Activated CD8-positive, alpha-beta T cell treated with anti-CD3 and anti-CD28 coated beads, Interleukin-2, amount 10 ng/mL, durations not matched to agents 7 days and 5 days (primary cell): ENCODE measurements at regions of chr6 and their contacts with region 1.

Region 1: DNA sequence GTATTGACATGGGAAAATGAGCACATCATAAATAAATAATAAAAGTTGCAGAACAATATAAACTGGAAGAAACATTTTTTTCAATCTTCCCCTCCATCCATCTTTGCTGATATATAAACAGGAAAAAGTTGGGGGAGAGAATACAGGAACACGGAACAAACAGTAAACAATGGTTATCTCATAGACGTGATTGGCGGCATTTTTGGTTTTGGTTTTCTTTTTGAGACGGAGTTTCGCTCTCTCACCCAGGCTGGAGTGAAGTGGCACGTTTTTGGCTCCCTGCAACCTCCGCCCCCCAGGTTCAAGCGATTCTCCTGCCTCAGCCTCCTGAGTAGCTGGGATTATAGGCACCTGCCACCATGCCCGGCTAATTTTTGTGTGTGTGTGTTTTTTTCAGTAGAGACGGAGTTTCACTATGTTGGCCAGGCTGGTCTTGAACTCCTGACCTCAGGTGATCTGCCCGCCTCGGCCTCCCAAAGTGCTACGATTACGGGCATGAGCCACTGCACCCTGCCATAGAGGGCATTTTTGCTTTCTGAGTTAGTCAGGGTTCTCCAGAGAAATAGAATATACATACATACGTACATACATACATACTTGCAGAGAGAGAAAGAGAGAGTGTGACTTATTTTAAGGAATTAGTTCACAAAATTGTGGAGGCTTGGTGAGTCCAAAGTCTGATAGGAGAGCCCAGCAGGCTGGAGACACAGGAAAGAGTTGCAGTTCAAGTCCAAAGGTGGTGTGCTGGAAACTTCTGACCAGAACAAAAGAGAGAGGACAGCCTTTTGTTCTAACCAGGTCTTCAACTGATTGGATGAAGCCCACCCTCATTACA is 22.6 kb downstream of the GNL1 start:
- DNase-seq: no peak
- ATAC-seq: no peak
- H3K4me3 Mint-ChIP-seq: peak overlapping the region; percentile 29
- H3K27ac Mint-ChIP-seq: peak overlapping the region; percentile 54
- H3K4me1 Mint-ChIP-seq: peaks cover 31% of the 10 kb centered on the region
- H3K27me3 Mint-ChIP-seq: peaks cover 5% of the 10 kb centered on the region

Region 2: GRCh38 chr6:30500421-30501355 is 33.0 kb before region 1 on chr6:
- CTCF ChIA-PET with region 1: interaction called, 124 read pairs
- POLR2A ChIA-PET with region 1: interaction called, 3 read pairs
- DNase-seq: no peak
- ATAC-seq: peak; percentile 65
- H3K4me3 Mint-ChIP-seq: peak overlapping the region; percentile 65
- H3K27ac Mint-ChIP-seq: peak overlapping the region; percentile 76
- H3K4me1 Mint-ChIP-seq: peaks cover 29% of the 10 kb centered on the region
- H3K27me3 Mint-ChIP-seq: no peaks in the 10 kb centered on the region

Region 3: DNA sequence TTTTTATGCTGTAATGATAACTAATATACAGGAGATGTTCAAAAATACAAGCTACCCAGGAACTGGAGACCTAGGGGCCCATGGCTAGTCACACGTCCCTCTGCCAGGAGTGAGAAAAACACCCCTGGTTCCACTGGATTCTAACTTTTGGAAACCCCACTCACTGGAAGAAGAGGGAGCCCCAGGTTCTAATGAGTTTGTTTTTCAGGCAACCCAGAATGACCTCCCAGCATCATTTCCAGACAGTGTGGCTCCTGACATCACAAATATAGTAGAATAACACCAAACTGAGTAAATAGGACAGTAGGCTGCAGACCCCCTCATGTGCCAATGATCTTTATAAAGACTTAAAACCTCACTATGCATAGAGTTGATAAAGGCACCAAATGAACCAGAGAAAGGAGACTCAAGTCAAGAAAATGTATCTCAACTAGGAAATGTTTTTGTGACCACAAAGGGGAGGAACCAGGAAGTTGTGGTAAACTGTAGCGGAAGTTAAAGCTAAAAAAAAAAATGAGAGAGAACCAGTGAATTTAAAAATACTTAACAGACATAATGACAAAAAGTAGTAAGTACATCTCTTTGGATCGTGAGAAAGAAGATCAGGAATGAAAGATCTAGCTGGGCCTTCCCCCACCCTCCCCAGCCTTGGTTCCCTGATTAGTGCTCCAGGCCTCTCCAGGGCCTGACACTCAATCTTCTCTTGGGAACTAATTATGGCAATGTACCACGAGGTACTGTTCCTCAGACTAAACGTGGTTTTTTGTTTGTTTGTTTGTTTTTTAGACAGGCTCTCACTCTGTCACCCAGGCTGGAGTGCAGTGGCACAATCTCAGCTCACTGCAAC is 24.6 kb before region 1 on chr6:
- CTCF ChIA-PET with region 1: interaction called, 48 read pairs
- POLR2A ChIA-PET with region 1: interaction called, 5 read pairs
- DNase-seq: peak; percentile 68
- ATAC-seq: peak; percentile 75
- H3K4me3 Mint-ChIP-seq: peak overlapping the region; percentile 69
- H3K27ac Mint-ChIP-seq: peak overlapping the region; percentile 89
- H3K4me1 Mint-ChIP-seq: peaks cover 61% of the 10 kb centered on the region
- H3K27me3 Mint-ChIP-seq: no peaks in the 10 kb centered on the region

Region 4: GRCh38 chr6:30515932-30516753 is 17.5 kb before region 1 on chr6:
- CTCF ChIA-PET with region 1: interaction called, 48 read pairs
- POLR2A ChIA-PET with region 1: interaction called, 11 read pairs
- DNase-seq: peak; percentile 95
- ATAC-seq: peak; percentile 92
- H3K4me3 Mint-ChIP-seq: peak overlapping the region; percentile 80
- H3K27ac Mint-ChIP-seq: peak overlapping the region; percentile 97
- H3K4me1 Mint-ChIP-seq: peaks cover 64% of the 10 kb centered on the region
- H3K27me3 Mint-ChIP-seq: no peaks in the 10 kb centered on the region

Region 5: GRCh38 chr6:30556066-30556905 is 22.6 kb after region 1 on chr6 and contains the start of gene GNL1:
- CTCF ChIA-PET with region 1: interaction called, 15 read pairs
- POLR2A ChIA-PET with region 1: interaction called, 4 read pairs
- DNase-seq: peak; percentile 99
- ATAC-seq: peak; percentile 90
- H3K4me3 Mint-ChIP-seq: peak within 1 kb of the TSS; percentile 96
- H3K27ac Mint-ChIP-seq: peak within 1 kb of the TSS; percentile 96
- H3K4me1 Mint-ChIP-seq: peaks cover 30% of the 10 kb centered on the region
- H3K27me3 Mint-ChIP-seq: no peaks in the 10 kb centered on the region
- total RNA-seq, gene GNL1: 63.7 to 69.9 TPM

Region 6: DNA sequence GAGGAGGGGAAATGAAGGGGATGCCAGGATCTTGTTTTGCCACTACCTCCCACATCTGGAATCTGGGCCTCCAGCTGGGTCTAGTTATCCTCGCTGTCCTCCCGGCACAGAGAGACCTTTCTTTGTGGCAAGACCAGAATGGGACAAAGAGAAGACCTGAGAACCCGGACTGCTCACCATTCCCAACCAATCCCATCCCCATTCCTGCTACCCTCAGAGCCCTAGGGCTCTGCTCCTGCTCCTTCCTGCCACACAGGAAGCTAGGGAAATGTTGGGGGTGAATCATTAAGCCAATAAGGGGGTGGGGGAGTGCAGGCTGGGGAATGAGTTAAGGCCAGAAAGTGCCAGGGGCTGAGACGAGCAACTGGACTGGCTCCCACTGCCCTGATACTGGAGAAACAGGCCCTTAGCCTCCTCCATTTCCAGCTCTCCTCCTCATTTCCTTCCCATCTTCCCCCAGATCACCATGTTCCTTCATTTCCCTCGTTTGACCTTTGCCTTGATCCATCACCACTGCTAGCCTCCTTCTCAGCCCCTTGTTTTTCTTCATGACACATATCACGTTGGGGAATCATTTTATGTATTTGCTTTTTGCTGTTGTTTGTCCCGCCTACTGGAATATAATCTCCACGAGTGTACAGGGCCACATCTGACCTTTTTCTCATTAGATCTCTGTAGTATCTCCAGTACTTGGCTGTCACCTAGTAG is 215.3 kb after region 1 on chr6:
- CTCF ChIA-PET with region 1: no interaction called
- POLR2A ChIA-PET with region 1: no interaction called
- DNase-seq: no peak
- ATAC-seq: no peak
- H3K4me3 Mint-ChIP-seq: no peak overlapping the region
- H3K27ac Mint-ChIP-seq: no peak overlapping the region
- H3K4me1 Mint-ChIP-seq: peaks cover 50% of the 10 kb centered on the region
- H3K27me3 Mint-ChIP-seq: no peaks in the 10 kb centered on the region

Region 7: DNA sequence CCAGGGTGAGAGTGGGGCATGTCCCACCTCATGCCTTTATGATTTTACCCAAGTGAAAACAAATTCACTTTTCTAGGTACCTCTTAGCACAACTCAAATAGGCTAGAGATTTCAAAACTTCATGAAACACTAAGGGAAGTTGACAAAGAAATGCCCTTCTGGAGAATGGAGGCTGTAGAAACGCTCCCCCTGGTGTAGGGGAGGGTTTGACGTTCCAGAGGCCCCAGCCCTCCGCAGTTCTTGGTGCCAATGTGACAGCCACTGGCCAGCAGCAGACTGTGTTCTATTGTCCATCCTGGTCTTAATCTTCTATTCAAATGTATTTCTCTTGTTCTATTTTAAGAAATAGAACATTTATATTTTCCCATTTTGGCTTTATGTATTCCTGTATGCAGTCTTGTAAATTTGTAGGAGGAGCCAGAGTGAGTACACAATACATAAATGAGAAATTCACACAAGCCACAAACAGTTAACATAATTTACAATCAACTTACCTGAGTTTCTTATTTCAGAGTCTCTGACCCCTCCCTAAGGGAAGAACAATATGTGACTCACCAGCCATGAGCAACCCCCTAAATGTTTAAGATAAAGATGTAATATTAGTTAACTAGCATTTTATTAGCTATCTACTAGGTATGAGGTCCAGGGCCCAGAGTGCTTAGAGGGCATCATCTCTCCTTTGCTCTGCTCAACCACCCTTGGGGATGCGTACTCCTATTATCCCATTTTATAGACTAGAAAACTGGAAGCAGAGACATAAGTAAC is 441.0 kb after region 1 on chr6:
- CTCF ChIA-PET with region 1: no interaction called
- POLR2A ChIA-PET with region 1: no interaction called
- DNase-seq: no peak
- ATAC-seq: no peak
- H3K4me3 Mint-ChIP-seq: no peak overlapping the region
- H3K27ac Mint-ChIP-seq: no peak overlapping the region
- H3K4me1 Mint-ChIP-seq: no peaks in the 10 kb centered on the region
- H3K27me3 Mint-ChIP-seq: peaks cover 39% of the 10 kb centered on the region